ENCODE measurements at regions of chr9 and their contacts with region 1.

Region 1: GRCh38 chr9:136483589-136484152 is 831 bp upstream of the SEC16A start:
- DNase-seq: peak; percentile 93 to 97 (median 96)
- ATAC-seq: peak; percentile 70
- H3K4me3 ChIP-seq: peak overlapping the region; percentile 13
- H3K4me1 ChIP-seq: peaks cover 22% of the 10 kb centered on the region
- CTCF ChIP-seq: no peak

Region 2: DNA sequence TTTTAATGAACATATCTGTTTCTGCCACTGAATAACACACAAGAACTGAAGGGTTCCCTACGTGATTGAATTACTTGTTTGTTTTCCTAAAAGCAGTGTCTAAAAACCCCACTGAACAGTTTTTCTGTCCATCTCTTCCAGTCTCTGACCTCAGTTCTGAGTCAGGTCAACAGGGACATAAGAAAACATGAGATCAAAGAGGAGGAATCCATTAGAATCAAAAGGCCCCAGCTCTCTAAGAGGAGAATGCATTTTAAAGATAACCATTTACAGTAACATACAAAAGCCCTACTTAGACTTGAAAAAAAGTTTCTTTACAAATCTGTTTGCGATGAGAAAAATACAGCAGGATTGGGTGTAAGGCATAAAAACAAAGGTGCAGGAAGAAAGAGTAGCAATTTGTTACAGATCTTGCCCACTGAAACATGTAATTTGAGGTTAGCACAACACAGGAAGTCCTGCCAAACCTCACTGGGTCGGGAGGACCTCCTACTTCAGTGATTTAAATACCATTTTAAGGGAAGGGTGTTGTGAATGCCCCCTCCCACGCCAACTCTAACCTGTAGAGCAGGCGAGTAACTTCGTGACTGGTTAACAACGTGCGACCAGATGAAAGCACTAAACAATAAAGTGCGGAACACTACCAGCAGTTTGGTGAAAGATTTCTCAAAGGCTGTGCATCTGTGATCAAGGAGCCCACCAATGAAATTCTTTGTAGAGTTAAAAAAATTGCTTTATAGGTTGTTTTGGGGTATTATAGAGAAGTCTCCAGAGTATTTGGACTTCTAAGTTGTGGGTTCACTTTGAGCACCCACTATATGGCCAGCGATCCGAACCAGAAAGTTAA is 239.3 kb before region 1 on chr9:
- intact Hi-C with region 1: no loop called
- DNase-seq: no peak
- ATAC-seq: no peak
- H3K4me3 ChIP-seq: no peak overlapping the region
- H3K4me1 ChIP-seq: peaks cover 17% of the 10 kb centered on the region
- CTCF ChIP-seq: no peak

Region 3: DNA sequence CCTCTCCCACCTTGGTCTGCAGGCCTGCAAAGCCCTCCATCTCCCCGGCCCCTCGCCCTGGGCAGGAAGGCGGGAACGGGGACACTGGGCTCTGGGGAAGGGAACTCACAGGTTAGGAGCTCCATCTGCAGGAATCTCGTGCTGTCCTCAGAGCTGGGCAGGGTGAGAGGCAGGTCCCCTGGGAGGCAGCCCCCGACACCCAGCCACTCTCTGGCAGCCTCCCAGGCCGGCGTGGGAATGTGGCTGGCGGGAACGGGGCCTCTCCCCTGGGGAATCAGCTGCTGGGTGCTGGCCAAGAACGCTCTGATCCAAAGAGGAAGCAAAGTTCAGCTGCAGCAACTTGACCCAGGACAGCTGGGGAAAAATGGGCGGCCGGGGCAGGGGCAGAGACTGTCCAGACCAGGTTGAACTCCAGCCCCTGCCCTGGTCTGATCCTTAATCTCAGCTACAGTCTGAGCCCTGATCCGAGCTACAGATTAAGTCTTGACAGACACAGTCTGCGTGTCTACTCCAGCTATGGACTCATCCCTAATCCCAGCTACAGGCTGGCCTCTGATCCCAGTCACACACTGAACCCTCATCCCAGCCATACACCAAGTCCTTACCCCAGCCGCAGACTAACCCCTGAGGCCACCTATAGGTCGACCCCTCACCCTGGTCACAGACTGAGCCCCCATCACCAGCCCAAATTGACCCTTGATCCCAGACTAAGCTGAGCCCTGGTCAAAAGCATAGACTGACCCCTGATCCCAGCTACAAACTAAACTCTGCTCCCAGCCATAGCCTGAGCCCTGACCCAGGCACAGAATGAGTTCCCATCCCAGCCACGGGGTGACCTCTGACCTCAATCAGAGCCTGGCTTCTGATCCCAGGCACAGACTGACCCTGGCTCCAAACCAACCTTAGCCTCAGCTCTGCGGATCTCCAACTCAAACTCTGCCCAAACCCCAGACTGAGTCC is 141.7 kb after region 1 on chr9:
- intact Hi-C with region 1: loop called (anchors 2 kb)
- DNase-seq: peak; percentile 89 to 90 (median 90)
- ATAC-seq: peak; percentile 47
- H3K4me3 ChIP-seq: no peak overlapping the region
- H3K4me1 ChIP-seq: peaks cover 57% of the 10 kb centered on the region
- CTCF ChIP-seq: no peak

Region 4: GRCh38 chr9:136631038-136632000 is 147.6 kb after region 1 on chr9:
- intact Hi-C with region 1: loop called (anchors 2 kb)
- DNase-seq: peak; percentile 80 to 92 (median 90)
- ATAC-seq: peak; percentile 64
- H3K4me3 ChIP-seq: no peak overlapping the region
- H3K4me1 ChIP-seq: peaks cover 39% of the 10 kb centered on the region
- CTCF ChIP-seq: peak; percentile 76

Measured in mucosa of descending colon (tissue), 3 donors.